ENCODE measurements at regions of chr2 and their contacts with region 1.

Region 1: DNA sequence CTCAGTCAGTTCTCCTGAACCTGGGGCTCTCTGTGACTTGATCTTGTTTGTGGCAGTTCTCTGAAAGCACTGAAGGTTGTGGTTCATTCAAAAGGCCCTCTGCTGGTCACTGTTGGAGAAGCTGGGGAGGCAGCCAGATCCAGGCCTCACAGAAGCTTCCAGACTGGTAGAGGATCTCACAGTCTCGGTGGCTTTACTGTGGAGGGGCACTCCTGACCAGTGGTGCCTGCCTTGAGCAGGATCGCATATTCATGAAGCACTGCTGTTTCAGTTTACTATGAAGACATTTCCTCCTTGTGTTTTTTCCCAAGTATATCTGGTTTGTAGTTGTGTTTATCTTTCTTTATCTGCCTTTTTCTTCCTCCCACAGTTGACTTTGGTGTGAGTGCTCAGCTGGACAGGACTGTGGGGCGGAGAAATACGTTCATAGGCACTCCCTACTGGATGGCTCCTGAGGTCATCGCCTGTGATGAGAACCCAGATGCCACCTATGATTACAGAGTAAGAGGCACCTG is 133.9 kb downstream of the MAP4K4 start:
- DNase-seq: peak; percentile 64
- H3K4me3 ChIP-seq: no peak overlapping the region
- H3K27ac ChIP-seq: peak overlapping the region; percentile 58
- H3K4me1 ChIP-seq: peaks cover 52% of the 10 kb centered on the region
- H3K27me3 ChIP-seq: no peaks in the 10 kb centered on the region
- CTCF ChIP-seq: peak; percentile 66 to 82

Region 2: GRCh38 chr2:100968146-100969145 is 863.0 kb before region 1 on chr2:
- CTCF ChIA-PET with region 1: no interaction called
- dilution Hi-C with region 1: no loop called
- in situ Hi-C with region 1: no loop called
- intact Hi-C with region 1: no loop called
- DNase-seq: no peak
- H3K4me3 ChIP-seq: no peak overlapping the region
- H3K27ac ChIP-seq: no peak overlapping the region
- H3K4me1 ChIP-seq: no peaks in the 10 kb centered on the region
- H3K27me3 ChIP-seq: no peaks in the 10 kb centered on the region
- CTCF ChIP-seq: no peak

Region 3: DNA sequence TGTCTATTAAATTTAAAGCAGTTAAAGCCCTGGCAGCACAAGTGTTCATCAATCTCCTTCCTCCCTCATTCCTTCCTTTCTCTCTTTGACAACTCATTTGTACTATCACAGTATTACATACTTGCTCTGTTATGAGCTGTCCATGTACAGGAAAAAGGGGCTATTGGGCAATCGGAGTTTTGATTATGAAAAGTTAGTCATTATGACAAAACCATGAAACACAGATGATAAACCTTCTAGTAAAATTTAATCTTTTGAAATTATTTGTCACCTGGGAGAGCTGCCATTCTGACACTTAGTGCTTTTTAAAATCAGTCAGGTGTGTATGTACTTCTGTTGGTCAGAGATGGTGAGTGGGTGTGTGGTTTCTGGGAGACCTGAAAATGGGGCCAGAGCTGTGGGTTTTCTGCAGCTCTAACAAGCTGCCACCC is 94.5 kb before region 1 on chr2:
- CTCF ChIA-PET with region 1: no interaction called
- dilution Hi-C with region 1: no loop called
- in situ Hi-C with region 1: no loop called
- intact Hi-C with region 1: no loop called
- DNase-seq: peak; percentile 95
- H3K4me3 ChIP-seq: no peak overlapping the region
- H3K27ac ChIP-seq: peak overlapping the region; percentile 93
- H3K4me1 ChIP-seq: peaks cover 80% of the 10 kb centered on the region
- H3K27me3 ChIP-seq: no peaks in the 10 kb centered on the region
- CTCF ChIP-seq: no peak

Region 4: GRCh38 chr2:101770726-101771125 is 60.7 kb before region 1 on chr2:
- CTCF ChIA-PET with region 1: no interaction called
- dilution Hi-C with region 1: no loop called
- in situ Hi-C with region 1: no loop called
- intact Hi-C with region 1: loop called (anchors 1 kb)
- DNase-seq: peak; percentile 57
- H3K4me3 ChIP-seq: no peak overlapping the region
- H3K27ac ChIP-seq: no peak overlapping the region
- H3K4me1 ChIP-seq: peaks cover 55% of the 10 kb centered on the region
- H3K27me3 ChIP-seq: no peaks in the 10 kb centered on the region
- CTCF ChIP-seq: peak; percentile 24 to 47

Region 5: DNA sequence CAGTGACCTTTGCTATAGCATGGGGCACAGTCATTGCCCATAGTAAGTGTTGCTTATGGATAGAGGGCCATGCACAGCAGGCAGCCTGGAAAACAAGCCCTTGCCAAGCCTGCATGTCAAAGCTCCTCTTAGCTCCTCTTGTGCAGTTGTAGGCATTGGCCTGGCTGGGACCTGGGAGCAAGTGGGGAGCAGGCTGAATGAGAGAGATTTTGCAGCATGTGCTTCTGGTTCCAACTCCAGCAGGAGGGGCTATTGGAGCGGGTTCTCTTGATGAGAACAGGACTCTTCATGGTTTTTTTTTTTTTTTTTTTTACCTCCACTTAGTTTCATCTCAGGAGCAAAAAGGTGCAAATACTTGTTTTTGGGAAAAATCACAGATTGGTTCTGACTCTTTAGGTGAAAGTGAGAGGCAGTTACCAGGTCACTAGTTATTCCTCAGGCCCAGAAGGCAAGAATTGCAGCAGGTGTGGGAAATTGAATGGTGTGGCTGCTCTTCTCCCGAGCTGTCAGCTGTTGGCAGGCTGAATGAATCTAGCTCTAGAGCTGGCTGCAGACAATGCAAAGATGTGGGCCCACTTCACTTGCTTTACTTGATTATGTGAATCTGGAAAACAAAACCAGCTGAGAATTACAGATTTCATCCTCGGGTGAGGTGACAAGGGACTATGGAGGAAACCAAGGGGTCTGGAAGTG is 38.0 kb before region 1 on chr2:
- CTCF ChIA-PET with region 1: interaction called, 24 read pairs
- dilution Hi-C with region 1: no loop called
- in situ Hi-C with region 1: no loop called
- intact Hi-C with region 1: loop called (anchors 5 kb)
- DNase-seq: no peak
- H3K4me3 ChIP-seq: no peak overlapping the region
- H3K27ac ChIP-seq: no peak overlapping the region
- H3K4me1 ChIP-seq: peaks cover 4% of the 10 kb centered on the region
- H3K27me3 ChIP-seq: no peaks in the 10 kb centered on the region
- CTCF ChIP-seq: peak in 1 of 2 donors; percentile 15

Region 6: DNA sequence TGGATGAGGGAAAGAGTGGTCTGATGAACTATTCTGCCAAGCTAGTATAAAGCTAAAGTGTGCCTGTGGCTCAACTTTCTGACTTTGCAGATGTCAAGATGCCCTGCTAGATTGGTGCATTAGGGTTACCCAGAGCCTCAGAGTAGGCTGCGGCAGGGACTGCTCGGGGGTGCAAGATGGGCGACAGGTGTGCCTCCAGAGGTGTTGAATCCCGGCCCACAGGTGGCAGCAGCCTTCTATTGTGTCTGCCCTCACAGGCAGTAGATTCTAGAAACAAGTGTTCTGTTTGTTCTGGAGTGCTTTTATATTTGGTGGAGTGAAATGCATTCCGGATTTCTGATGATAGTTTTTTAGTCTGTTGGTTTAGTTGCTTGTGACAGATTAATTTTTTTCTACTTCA is 28.7 kb after region 1 on chr2:
- CTCF ChIA-PET with region 1: no interaction called
- dilution Hi-C with region 1: no loop called
- in situ Hi-C with region 1: no loop called
- intact Hi-C with region 1: no loop called
- DNase-seq: no peak
- H3K4me3 ChIP-seq: no peak overlapping the region
- H3K27ac ChIP-seq: no peak overlapping the region
- H3K4me1 ChIP-seq: peaks cover 12% of the 10 kb centered on the region
- H3K27me3 ChIP-seq: no peaks in the 10 kb centered on the region
- CTCF ChIP-seq: peak in 1 of 2 donors; percentile 4

Region 7: DNA sequence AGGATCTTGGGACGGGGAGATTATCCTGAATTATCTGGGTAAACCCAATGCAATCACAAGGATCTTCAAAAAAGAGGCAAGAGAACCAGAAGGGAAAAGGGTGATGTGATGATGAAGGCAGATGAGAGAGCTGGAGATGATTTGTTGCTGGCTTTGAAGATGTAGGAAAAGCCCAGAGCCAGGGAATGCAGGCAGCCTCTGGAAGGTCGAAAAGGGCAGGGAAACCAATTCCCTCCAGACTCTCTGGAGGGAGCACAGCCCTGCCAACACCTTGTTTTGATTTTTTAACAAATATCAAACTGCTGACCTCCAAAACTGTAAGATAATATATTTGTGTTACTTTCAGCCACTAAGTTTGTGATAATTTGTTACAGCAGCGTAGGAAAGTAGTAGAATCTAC is 111.4 kb after region 1 on chr2:
- CTCF ChIA-PET with region 1: no interaction called
- dilution Hi-C with region 1: no loop called
- in situ Hi-C with region 1: no loop called
- intact Hi-C with region 1: no loop called
- DNase-seq: no peak
- H3K4me3 ChIP-seq: no peak overlapping the region
- H3K27ac ChIP-seq: no peak overlapping the region
- H3K4me1 ChIP-seq: no peaks in the 10 kb centered on the region
- H3K27me3 ChIP-seq: no peaks in the 10 kb centered on the region
- CTCF ChIP-seq: no peak

Measured in mammary epithelial cell (primary cell).